ENCODE measurements at regions of chr9 and their contacts with region 1.

Region 1: GRCh38 chr9:73023025-73023541 is 70.2 kb upstream of the ALDH1A1 start:
- DNase-seq: peak; percentile 87
- H3K4me3 ChIP-seq: peak overlapping the region; percentile 12
- H3K27ac ChIP-seq: peak overlapping the region; percentile 14
- H3K4me1 ChIP-seq: peaks cover 11% of the 10 kb centered on the region
- H3K27me3 ChIP-seq: no peaks in the 10 kb centered on the region
- CTCF ChIP-seq: peak; percentile 93

Region 2: DNA sequence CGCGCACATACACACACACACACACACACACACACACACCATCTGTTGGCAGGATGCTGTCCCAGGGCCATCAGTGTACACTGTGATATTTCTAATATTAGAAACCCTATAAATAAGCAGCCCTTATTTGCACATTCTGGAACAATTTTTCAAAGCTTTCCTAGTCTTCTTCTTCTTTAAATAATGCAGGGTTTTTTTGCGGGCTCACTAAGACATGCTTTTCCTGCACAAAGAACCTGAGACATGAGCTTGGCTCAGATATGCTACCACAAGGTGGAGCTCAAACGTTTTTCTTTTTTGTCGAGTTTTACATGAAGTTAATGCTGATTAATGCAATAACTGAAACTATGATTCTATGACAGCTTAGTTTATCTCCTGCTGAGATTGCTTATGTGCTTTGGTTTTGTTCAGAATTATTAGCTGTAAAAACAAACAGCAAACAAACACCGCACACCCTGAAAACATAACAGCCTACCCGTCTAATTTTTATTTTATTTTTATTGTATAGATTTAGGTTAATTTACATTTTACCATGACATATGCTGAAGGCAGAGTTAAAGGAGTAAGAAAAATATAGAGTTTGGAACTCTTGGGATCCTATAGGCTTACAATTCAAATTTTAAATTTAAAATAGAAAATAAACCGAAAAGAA is 166.0 kb before region 1 on chr9:
- CTCF ChIA-PET with region 1: interaction called, 11 read pairs
- POLR2A ChIA-PET with region 1: no interaction called
- intact Hi-C with region 1: loop called (anchors 1 kb)
- DNase-seq: peak; percentile 84
- H3K4me3 ChIP-seq: no peak overlapping the region
- H3K27ac ChIP-seq: no peak overlapping the region
- H3K4me1 ChIP-seq: peaks cover 17% of the 10 kb centered on the region
- H3K27me3 ChIP-seq: no peaks in the 10 kb centered on the region
- CTCF ChIP-seq: peak; percentile 80

Region 3: GRCh38 chr9:72871685-72872084 is 151.4 kb before region 1 on chr9:
- CTCF ChIA-PET with region 1: interaction called, 18 read pairs
- POLR2A ChIA-PET with region 1: no interaction called
- intact Hi-C with region 1: loop called (anchors 1 kb)
- DNase-seq: peak; percentile 56
- H3K4me3 ChIP-seq: no peak overlapping the region
- H3K27ac ChIP-seq: no peak overlapping the region
- H3K4me1 ChIP-seq: peaks cover 6% of the 10 kb centered on the region
- H3K27me3 ChIP-seq: no peaks in the 10 kb centered on the region
- CTCF ChIP-seq: peak; percentile 67

Region 4: DNA sequence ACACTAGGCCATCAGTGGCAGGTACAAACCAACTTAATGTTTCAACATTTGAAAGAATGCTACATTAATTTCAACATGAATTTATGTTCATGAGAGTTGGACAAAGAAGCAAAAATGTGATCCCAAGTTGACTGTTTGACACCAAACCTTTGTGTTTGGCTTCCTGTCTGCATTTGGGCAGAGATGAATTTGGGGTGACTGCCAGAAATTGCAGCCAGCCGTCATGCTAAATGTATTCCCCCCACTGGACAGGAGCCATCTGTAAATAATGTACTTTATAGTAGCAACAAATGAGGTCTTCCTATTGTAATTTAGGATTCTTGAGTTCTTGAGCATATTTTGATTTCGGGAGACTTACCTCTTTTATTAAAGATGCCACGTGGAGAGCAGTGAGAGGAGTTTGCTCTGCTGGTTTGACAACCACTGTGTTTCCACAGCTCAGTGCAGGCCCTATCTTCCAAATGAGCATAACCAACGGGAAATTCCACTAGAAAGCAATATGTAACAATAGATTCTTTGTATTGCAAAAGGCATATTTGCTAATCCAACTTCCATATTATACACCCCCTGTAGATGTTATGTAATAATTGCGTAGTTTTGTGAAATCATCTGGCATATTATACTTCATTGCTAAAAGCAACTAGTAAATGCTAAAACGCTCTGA is 97.8 kb before region 1 on chr9:
- CTCF ChIA-PET with region 1: no interaction called
- POLR2A ChIA-PET with region 1: no interaction called
- intact Hi-C with region 1: no loop called
- DNase-seq: peak; percentile 52
- H3K4me3 ChIP-seq: no peak overlapping the region
- H3K27ac ChIP-seq: no peak overlapping the region
- H3K4me1 ChIP-seq: peaks cover 15% of the 10 kb centered on the region
- H3K27me3 ChIP-seq: no peaks in the 10 kb centered on the region
- CTCF ChIP-seq: no peak

Region 5: DNA sequence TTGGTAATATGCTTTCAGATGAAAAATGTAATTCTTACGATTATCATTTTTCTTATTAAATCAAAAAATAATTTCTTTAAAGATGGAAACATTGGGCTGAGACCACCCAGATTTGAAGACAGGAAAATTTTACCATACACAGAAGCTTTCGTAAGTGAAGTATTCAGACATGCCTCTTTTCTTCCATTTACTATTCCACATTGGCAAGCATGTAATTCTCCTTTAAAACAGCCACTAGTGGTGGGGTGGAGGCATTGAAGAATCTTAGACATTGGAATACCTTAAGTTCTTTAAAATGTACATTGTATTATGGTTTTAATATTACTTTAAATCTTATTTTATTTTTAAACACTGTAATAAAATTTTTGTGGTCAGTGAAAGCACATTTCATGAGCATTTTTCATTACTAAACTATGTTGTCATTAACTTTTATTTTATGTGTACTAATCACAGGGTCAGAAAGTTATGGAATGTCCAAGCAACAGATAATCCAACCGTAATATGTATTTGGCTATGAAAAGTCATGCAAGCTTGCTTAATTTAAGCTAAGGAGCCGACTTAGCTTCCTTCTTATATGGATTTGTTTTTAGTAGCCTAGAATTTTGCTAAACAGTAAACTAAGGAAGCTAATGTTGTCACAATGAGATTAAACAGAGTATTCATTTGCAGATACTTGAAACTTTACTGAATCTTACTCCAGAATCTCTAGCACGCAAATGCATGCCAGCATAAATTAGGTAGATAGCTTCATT is 27.2 kb after region 1 on chr9:
- CTCF ChIA-PET with region 1: interaction called, 13 read pairs
- POLR2A ChIA-PET with region 1: no interaction called
- intact Hi-C with region 1: no loop called
- DNase-seq: no peak
- H3K4me3 ChIP-seq: no peak overlapping the region
- H3K27ac ChIP-seq: no peak overlapping the region
- H3K4me1 ChIP-seq: peaks cover 8% of the 10 kb centered on the region
- H3K27me3 ChIP-seq: no peaks in the 10 kb centered on the region
- CTCF ChIP-seq: no peak

Region 6: GRCh38 chr9:73081979-73082657 is 59.0 kb after region 1 on chr9:
- CTCF ChIA-PET with region 1: no interaction called
- POLR2A ChIA-PET with region 1: no interaction called
- intact Hi-C with region 1: loop called (anchors 1 kb)
- DNase-seq: peak; percentile 80
- H3K4me3 ChIP-seq: no peak overlapping the region
- H3K27ac ChIP-seq: no peak overlapping the region
- H3K4me1 ChIP-seq: peaks cover 4% of the 10 kb centered on the region
- H3K27me3 ChIP-seq: no peaks in the 10 kb centered on the region
- CTCF ChIP-seq: peak; percentile 84

Region 7: GRCh38 chr9:73370053-73370452 is 347.0 kb after region 1 on chr9:
- CTCF ChIA-PET with region 1: no interaction called
- POLR2A ChIA-PET with region 1: no interaction called
- intact Hi-C with region 1: no loop called
- DNase-seq: peak; percentile 86
- H3K4me3 ChIP-seq: no peak overlapping the region
- H3K27ac ChIP-seq: no peak overlapping the region
- H3K4me1 ChIP-seq: no peaks in the 10 kb centered on the region
- H3K27me3 ChIP-seq: peaks cover 23% of the 10 kb centered on the region
- CTCF ChIP-seq: no peak

Measured in A673 (cell line).